Calu3 (cell line): ENCODE measurements at regions of chr14 and their contacts with region 1.

Region 1: GRCh38 chr14:105490572-105491366 is at the start of gene TEDC1:
- DNase-seq: peak; percentile 99
- H3K4me3 Mint-ChIP-seq: peak within 1 kb of the TSS; percentile 80
- H3K27ac Mint-ChIP-seq: peak within 1 kb of the TSS; percentile 91
- H3K4me1 Mint-ChIP-seq: peaks cover 9% of the 10 kb centered on the region
- H3K27me3 Mint-ChIP-seq: no peaks in the 10 kb centered on the region
- CTCF ChIP-seq: peak; percentile 74
- total RNA-seq, gene TEDC1: 33.7 and 36.8 TPM in 2 replicates

Region 2: GRCh38 chr14:105369653-105370040 is 121.1 kb before region 1 on chr14:
- CTCF ChIA-PET with region 1: interaction called, 24 read pairs
- intact Hi-C with region 1: loop called (anchors 2 kb)
- DNase-seq: no peak
- H3K4me3 Mint-ChIP-seq: no peak overlapping the region
- H3K27ac Mint-ChIP-seq: no peak overlapping the region
- H3K4me1 Mint-ChIP-seq: no peaks in the 10 kb centered on the region
- H3K27me3 Mint-ChIP-seq: no peaks in the 10 kb centered on the region
- CTCF ChIP-seq: no peak